ENCODE measurements at regions of chr17 and their contacts with region 1.

Region 1: DNA sequence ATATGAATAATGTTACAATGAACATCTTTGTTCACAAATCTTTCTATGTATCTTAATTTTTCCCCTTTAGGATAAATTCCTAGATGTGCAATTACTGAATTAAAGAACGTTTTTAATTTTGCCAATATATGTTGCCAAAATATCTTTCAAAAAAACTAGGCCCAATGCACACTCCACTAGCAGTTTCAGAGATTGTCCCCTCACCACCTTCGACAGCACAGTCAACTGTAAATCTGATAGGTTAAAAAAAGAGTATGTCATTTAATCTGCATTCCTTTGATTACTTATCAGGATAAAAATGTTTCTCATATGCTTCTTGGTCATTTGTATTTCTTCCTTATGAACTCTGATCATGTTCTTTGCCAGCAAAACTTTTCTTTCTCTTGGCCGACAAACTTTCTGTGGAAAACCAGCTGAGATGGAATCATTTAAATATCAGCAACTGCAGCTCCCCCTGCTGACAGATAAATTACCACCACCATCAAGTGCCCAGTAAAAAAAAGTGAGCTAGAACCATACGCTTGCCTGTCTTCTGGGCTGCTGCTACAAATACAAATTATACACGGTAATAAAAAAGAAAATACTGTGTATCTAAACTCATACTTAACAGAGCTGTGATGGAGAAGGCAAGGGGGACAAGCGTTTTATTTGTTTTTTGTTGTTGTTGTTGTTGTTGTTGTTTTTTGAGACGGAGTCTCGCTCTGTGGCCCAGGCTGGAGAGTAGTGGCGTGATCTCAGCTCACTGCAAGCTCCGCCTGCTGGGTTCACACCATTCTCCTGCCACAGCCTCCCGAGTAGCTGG is 19.6 kb upstream of the KANSL1 start:
- DNase-seq: peak; percentile 57
- H3K4me3 Mint-ChIP-seq: no peak overlapping the region
- H3K27ac Mint-ChIP-seq: peak overlapping the region; percentile 12
- H3K4me1 Mint-ChIP-seq: peaks cover 14% of the 10 kb centered on the region
- H3K27me3 Mint-ChIP-seq: no peaks in the 10 kb centered on the region

Region 2: GRCh38 chr17:46002311-46002972 is 210.4 kb before region 1 on chr17:
- intact Hi-C with region 1: loop called (anchors 1 kb)
- DNase-seq: peak; percentile 63
- H3K4me3 Mint-ChIP-seq: no peak overlapping the region
- H3K27ac Mint-ChIP-seq: no peak overlapping the region
- H3K4me1 Mint-ChIP-seq: peaks cover 8% of the 10 kb centered on the region
- H3K27me3 Mint-ChIP-seq: peaks cover 6% of the 10 kb centered on the region

Region 3: DNA sequence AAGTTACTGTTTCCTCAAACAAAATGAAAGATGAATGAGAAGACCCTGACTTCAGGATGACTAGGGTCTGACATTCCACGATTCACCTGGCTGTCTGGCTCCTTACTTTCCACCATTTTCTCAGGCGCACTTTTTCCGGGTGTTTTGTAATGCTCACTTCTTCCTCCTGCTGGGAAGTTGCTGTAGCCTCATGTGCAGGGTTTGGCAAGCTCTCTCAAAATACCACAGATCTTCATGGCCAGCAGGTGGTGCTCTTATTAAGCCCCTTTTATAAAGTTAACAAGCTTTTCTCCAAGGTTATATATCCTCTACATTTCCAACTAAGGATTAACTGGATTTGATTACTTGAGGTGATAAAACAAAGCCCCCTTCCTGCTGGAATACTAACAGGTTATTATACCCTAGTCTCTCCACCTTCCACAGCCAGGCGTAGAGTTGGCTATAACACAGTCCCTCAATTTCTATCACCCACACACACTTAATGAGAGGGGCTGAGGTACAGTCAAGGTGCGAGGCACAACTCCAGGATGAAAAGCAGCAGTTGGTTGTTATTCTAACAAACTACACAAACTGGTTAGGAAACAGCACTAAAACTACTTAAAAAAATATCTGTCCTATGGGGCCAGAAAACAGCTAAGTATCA is 168.4 kb before region 1 on chr17:
- intact Hi-C with region 1: loop called (anchors 2 kb)
- DNase-seq: peak; percentile 12
- H3K4me3 Mint-ChIP-seq: no peak overlapping the region
- H3K27ac Mint-ChIP-seq: peak overlapping the region; percentile 2
- H3K4me1 Mint-ChIP-seq: peaks cover 30% of the 10 kb centered on the region
- H3K27me3 Mint-ChIP-seq: no peaks in the 10 kb centered on the region

Region 4: DNA sequence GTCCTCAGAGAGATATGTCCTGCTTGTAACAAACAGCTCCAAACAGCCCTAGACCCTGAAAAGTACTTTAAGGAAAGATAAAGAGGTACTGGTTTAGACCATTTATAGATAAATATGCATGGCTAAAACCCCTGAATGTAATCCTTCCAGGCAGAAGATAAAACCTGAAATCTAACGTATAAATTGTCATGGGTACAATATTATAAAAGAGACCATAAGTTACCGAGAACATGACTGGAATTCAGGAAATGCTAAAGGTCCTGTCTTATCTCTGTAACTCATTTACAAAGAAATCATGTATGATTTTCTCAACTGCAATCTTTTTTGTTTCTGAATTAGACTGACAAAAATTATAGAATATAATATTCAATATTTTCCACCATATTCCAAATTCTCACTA is 10.4 kb before region 1 on chr17:
- intact Hi-C with region 1: no loop called
- DNase-seq: no peak
- H3K4me3 Mint-ChIP-seq: no peak overlapping the region
- H3K27ac Mint-ChIP-seq: no peak overlapping the region
- H3K4me1 Mint-ChIP-seq: peaks cover 36% of the 10 kb centered on the region
- H3K27me3 Mint-ChIP-seq: no peaks in the 10 kb centered on the region

Measured in activated T-helper 1 cell treated with anti-CD3 and anti-CD28 coated beads, Interleukin-12 subunit alpha, Interleukin-12 subunit beta, Interleukin-2, Interleukin-4 antibody, amounts not matched to agents 30 ng/mL and 10 ng/mL and 1 ng/mL, durations not matched to agents 14 hours and 24 hours and 36 hours (primary cell).